GM13977 (cell line): ENCODE measurements at regions of chr16 and their contacts with region 1.

Region 1: DNA sequence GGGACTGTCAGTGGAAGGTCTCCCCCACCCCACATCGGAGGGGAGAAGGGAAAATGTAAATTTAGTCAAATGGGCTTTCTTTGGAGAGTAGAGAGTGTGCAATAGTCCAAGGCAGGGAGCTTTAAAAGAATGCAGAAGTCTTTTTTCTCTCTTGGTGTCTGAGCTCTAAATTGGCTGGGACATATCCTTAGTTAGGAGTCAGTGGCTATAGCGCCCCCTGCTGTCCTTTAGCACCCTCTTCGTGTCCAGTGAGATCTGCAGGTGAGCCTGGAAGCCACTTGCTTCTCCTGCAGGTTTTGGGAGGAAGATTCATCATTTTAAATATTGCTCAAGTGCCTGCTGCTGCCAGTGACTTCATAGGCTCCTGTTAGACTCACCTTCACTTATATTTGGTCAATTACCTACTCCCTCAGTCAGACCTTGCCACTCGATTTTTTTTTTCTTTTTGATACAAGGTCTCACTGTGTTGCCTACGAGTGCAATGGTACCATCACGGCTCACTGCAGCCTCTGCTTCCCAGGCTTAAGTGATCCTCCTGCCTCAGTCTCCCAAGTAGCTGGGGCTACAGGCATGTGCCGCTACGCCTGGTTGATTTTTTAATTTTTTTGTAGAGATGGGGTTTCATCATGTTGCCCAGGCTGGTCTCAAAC is 174.8 kb downstream of the PRKCB start:
- DNase-seq: peak; percentile 48
- CTCF ChIP-seq: peak; percentile 79

Region 2: GRCh38 chr16:23803591-23804123 is 206.9 kb before region 1 on chr16:
- in situ Hi-C with region 1: loop called (anchors 10 kb)
- DNase-seq: peak; percentile 78
- CTCF ChIP-seq: peak; percentile 92